Activated T-helper 1 cell treated with anti-CD3 and anti-CD28 coated beads, Interleukin-12 subunit alpha, Interleukin-12 subunit beta, Interleukin-2, Interleukin-4 antibody, amounts not matched to agents 30 ng/mL and 10 ng/mL and 1 ng/mL, durations not matched to agents 14 hours and 24 hours and 36 hours (primary cell): ENCODE measurements at regions of chr2 and their contacts with region 1.

Region 1: DNA sequence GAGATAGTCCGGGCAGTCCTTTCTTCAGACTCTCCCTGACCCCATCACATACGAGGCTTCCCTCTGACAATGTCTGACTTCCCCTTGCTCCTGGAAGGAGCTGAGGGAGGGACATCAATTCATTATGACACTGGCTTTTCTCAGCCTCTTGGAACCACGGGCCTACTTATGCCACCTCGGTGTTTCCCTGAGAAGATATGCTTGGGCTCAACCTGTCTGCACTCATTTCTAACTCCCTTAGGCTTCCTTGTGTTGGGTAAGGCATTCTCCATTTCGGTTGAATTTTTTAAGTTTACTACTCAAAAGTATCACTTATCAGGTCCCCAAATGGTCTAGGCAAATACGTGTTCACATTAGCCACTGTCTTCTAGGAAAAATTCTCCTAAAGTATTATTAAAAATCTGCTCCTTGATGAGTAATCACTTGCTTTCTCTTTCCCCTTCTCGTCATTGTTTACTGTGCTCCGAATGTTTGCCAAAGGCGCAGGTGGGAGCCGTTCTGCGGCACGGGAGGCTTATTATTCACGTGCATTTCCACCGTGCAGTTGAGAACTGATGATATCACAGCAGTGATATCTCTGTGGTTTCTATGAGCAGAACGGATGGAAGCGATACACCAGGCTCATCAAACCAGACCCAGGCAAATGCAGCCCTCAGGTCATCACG is 33.1 kb downstream of the ARL4C start:
- DNase-seq: peak; percentile 68
- H3K4me3 Mint-ChIP-seq: peak overlapping the region; percentile 82
- H3K27ac Mint-ChIP-seq: peak overlapping the region; percentile 90
- H3K4me1 Mint-ChIP-seq: peaks cover 77% of the 10 kb centered on the region
- H3K27me3 Mint-ChIP-seq: no peaks in the 10 kb centered on the region

Region 2: GRCh38 chr2:234411793-234412192 is 52.0 kb before region 1 on chr2:
- intact Hi-C with region 1: no loop called
- DNase-seq: no peak
- H3K4me3 Mint-ChIP-seq: no peak overlapping the region
- H3K27ac Mint-ChIP-seq: no peak overlapping the region
- H3K4me1 Mint-ChIP-seq: peaks cover 43% of the 10 kb centered on the region
- H3K27me3 Mint-ChIP-seq: no peaks in the 10 kb centered on the region

Region 3: DNA sequence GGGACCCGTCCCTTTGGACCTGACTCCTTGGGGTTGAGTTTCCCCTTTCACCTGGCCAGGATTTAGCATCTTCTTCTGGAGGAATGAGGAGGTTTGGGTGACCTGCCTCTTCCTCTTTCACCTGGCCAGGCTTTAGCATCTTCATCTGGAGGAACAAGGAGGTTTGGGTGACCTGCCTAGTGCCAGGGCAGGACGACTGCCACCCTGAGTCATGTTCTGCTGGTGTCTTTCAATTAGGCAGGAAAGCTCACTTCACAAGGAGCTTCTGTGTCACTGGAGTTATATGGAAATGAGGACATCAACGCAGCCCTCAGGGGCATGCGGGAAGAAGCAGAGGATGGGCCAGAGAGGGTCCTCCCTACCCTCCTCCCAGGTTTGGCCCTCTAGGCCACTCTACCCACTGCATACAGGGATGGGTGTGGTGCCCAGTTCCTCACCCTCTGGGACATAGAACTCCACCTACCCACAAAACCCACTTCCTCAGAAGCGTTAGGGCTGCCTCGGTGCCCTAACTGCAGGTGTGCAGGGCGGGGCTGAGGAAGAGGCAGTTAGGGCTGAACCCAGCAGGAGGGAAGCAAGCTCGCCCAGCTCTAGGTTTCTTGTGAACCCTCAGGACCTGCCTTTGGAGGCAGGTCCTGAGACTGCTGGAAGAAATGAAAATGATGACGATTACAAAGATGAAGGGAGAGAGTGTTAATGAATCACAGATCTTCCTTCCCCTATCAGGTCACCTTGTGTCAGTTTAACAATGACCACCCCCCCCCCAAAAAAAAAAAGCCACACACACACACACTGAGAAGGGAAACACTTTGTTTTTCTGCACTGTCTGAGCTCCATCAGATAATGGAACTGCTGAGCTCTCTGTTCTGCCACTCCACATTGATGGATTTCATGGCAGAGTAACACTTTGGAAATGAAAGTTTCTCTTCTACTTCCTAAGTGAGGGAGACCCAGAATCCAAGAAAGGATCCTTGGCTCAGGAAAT is 37.8 kb before region 1 on chr2:
- intact Hi-C with region 1: loop called (anchors 1 kb)
- DNase-seq: peak; percentile 75
- H3K4me3 Mint-ChIP-seq: peak overlapping the region; percentile 75
- H3K27ac Mint-ChIP-seq: peak overlapping the region; percentile 99
- H3K4me1 Mint-ChIP-seq: peaks cover 77% of the 10 kb centered on the region
- H3K27me3 Mint-ChIP-seq: no peaks in the 10 kb centered on the region

Region 4: DNA sequence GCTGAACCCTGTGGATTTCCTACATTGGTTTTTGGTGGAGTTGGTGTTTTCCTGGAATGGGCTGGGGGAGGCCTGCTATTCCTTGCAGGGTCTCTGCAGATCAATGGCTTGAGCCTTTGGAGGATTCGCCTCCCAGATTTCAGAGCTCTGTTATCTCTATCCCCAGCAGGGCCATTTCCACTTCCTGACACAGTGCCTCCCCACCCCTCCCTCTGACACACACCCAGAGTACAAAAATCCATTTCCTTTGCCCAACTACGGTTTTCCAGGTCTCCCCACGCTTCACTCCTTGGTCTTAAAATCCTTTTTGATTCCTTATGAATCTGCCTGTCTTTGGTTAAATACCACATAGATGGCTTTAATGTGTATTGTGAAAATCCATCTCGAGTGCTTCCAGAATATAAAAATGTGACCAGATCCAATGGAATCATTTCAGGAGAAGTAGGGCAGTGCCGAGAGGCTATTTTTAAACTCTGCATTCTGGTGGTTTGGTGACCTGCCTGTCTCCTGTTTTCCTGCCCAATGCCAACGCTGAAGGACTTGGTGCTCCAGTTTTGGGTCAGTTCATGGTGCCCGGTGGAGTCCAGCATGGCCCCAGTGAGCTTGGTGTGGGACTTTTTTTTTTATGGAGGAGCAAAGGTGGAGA is 27.8 kb before region 1 on chr2:
- intact Hi-C with region 1: no loop called
- DNase-seq: no peak
- H3K4me3 Mint-ChIP-seq: no peak overlapping the region
- H3K27ac Mint-ChIP-seq: no peak overlapping the region
- H3K4me1 Mint-ChIP-seq: peaks cover 74% of the 10 kb centered on the region
- H3K27me3 Mint-ChIP-seq: no peaks in the 10 kb centered on the region

Region 5: DNA sequence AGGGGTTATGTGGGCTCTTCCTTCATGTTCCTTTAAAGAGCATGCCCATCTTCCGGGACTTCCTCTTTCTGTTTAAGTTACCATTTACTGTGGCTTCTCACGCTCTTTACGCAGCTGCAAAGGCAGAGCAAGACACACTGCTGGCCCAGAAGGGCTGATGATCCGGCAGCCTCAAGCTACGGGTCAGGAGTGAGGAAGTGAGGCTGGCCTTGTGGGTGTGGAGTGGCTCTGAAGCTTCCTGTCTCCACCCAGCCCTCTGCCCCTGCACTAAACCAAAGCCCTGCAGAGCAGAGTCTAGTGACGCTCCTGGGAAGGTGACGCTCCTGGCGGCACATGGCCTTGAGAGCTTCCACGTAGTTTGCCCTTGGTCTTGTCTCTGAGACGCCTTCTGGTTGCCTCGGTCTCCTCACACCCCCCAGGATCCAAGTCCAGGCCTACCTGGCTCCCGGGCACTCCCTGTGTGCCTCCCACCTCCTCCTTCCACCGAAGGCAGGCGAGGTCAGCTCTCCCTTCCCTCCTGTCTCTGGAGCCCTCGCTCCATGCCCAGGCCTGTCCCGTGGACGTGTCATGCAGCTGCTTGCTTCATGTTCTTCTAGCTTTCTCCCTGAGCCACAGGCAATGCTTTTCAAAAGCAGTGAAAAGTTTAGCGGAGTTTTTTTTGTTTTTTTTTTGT is 17.2 kb before region 1 on chr2:
- intact Hi-C with region 1: loop called (anchors 1 kb)
- DNase-seq: peak; percentile 87
- H3K4me3 Mint-ChIP-seq: peak overlapping the region; percentile 75
- H3K27ac Mint-ChIP-seq: peak overlapping the region; percentile 99
- H3K4me1 Mint-ChIP-seq: peaks cover 88% of the 10 kb centered on the region
- H3K27me3 Mint-ChIP-seq: no peaks in the 10 kb centered on the region

Region 6: DNA sequence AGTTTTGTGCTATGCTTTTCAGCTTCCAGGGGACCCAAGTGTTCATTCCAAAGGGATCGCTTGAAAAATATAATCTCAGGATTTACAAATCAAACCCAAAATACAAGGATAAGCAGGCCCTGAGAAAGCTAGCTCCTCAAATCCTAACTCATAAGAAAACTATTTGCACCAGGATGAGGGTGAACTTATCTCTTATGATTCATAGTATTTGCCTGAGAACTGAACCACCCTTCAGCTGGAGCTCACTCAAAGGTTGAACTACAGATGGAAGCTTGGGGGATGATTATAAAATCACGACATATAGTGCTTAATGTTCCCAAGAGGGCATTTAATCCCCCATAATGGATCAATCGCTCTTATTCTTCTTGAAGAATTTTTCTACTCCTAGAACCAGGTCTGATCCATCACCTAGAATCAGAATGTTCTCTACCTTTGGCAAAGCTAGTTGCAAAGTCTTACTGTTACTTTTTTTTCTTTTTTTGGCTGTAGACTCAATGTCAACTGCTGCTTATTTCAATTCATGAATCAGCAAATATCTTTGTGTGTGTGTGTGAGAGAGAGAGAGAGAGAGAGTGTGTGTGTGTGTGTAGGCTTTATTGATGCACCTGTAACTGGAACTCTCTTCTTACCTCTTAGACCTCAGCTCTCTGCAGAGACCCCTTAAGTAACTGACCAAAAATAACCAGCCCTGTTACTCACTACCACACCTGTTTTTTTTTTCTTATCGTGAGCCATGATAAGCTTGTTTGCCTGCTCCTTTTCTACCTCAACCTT is 11.7 kb before region 1 on chr2:
- intact Hi-C with region 1: loop called (anchors 1 kb)
- DNase-seq: no peak
- H3K4me3 Mint-ChIP-seq: peak overlapping the region; percentile 79
- H3K27ac Mint-ChIP-seq: peak overlapping the region; percentile 90
- H3K4me1 Mint-ChIP-seq: peaks cover 88% of the 10 kb centered on the region
- H3K27me3 Mint-ChIP-seq: peaks cover 2% of the 10 kb centered on the region

Region 7: GRCh38 chr2:234474654-234475053 is 10.9 kb after region 1 on chr2:
- intact Hi-C with region 1: loop called (anchors 1 kb)
- DNase-seq: no peak
- H3K4me3 Mint-ChIP-seq: no peak overlapping the region
- H3K27ac Mint-ChIP-seq: peak overlapping the region; percentile 91
- H3K4me1 Mint-ChIP-seq: peaks cover 53% of the 10 kb centered on the region
- H3K27me3 Mint-ChIP-seq: no peaks in the 10 kb centered on the region

Region 8: DNA sequence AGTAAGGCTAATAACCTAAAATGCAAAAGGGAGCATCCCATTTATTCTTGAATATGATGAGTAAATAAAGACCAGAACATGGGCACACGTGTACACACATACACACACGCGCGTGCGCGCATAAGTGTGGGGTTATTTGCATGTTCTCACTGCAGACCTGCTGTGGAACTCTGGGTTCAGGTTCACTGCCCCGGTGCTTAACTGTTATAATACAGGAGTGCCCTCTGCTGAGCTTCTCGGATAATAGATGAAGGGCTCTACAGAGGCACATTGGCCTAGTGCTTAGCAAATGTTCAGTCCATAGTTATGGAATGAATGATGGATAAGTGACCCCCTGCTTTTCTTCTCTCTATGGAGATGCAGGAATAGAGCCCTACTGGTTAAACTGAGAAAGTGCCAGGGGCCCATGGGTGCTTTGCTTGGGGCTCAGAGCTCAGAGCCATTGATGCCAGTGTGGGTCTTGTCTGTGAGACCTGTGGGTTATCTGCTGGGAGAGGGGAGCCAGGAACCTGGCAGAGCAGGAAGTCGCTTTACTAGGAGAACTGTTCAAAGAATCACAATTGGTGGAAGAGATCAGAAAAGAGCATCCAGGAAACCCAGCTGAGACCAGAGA is 36.7 kb after region 1 on chr2:
- intact Hi-C with region 1: no loop called
- DNase-seq: peak; percentile 72
- H3K4me3 Mint-ChIP-seq: peak overlapping the region; percentile 58
- H3K27ac Mint-ChIP-seq: peak overlapping the region; percentile 34
- H3K4me1 Mint-ChIP-seq: peaks cover 32% of the 10 kb centered on the region
- H3K27me3 Mint-ChIP-seq: peaks cover 13% of the 10 kb centered on the region